ENCODE measurements at regions of chr3 and their contacts with region 1.

Region 1: DNA sequence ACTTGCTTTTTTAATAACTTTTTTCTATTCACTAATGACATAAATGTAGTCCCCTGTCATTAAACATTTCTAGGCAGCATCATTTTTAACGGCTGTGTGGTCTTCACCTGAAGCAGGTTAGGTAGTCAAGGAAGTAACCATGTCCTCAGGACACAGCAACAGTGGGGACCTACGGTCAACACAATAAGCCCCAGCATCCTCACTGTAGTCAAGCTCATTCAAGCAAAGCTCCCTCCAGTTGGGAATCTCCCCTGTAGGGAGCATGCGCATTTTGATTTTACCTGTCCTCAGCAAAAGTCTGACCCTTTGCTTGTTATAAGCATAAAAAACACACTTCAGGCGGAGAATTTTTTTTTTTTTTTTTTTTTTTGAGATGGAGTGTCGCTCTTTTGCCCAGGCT is 151.4 kb downstream of the SHQ1 start:
- DNase-seq: no peak
- H3K4me3 Mint-ChIP-seq: no peak overlapping the region
- H3K27ac Mint-ChIP-seq: no peak overlapping the region
- H3K4me1 Mint-ChIP-seq: no peaks in the 10 kb centered on the region
- H3K27me3 Mint-ChIP-seq: peaks cover 15% of the 10 kb centered on the region
- CTCF ChIP-seq: no peak

Region 2: GRCh38 chr3:72722930-72723726 is 26.3 kb after region 1 on chr3:
- CTCF ChIA-PET with region 1: interaction called, 10 read pairs
- intact Hi-C with region 1: no loop called
- DNase-seq: peak; percentile 50
- H3K4me3 Mint-ChIP-seq: no peak overlapping the region
- H3K27ac Mint-ChIP-seq: peak overlapping the region; percentile 40
- H3K4me1 Mint-ChIP-seq: peaks cover 19% of the 10 kb centered on the region
- H3K27me3 Mint-ChIP-seq: no peaks in the 10 kb centered on the region
- CTCF ChIP-seq: no peak

Region 3: GRCh38 chr3:73143821-73144237 is 447.0 kb after region 1 on chr3:
- CTCF ChIA-PET with region 1: no interaction called
- intact Hi-C with region 1: no loop called
- DNase-seq: no peak
- H3K4me3 Mint-ChIP-seq: no peak overlapping the region
- H3K27ac Mint-ChIP-seq: no peak overlapping the region
- H3K4me1 Mint-ChIP-seq: no peaks in the 10 kb centered on the region
- H3K27me3 Mint-ChIP-seq: no peaks in the 10 kb centered on the region
- CTCF ChIP-seq: no peak